ENCODE measurements at regions of chr16 and their contacts with region 1.

Region 1: GRCh38 chr16:89700100-89700648 is 1.3 kb downstream of the SPATA2L start:
- DNase-seq: peak; percentile 92 to 97 (median 93)
- H3K4me3 ChIP-seq: peak overlapping the region; percentile 34 to 64
- H3K4me3 Mint-ChIP-seq: peak overlapping the region; percentile 51 to 87 (median 70)
- H3K27ac ChIP-seq: peak overlapping the region; percentile 80
- H3K27ac Mint-ChIP-seq: peak overlapping the region; percentile 83 to 94 (median 92)
- H3K4me1 ChIP-seq: peaks cover 34% of the 10 kb centered on the region
- H3K4me1 Mint-ChIP-seq: peaks cover 8 to 42% (median 16%) of the 10 kb centered on the region in 4 donors
- H3K27me3 ChIP-seq: no peaks in the 10 kb centered on the region
- H3K27me3 Mint-ChIP-seq: no peaks in the 10 kb centered on the region

Region 2: GRCh38 chr16:89300311-89300975 is 399.7 kb before region 1 on chr16:
- CTCF ChIA-PET with region 1: no interaction called
- POLR2A ChIA-PET with region 1: no interaction called
- intact Hi-C with region 1: no loop called
- DNase-seq: no peak
- H3K4me3 ChIP-seq: no peak overlapping the region
- H3K4me3 Mint-ChIP-seq: no peak overlapping the region
- H3K27ac ChIP-seq: no peak overlapping the region
- H3K27ac Mint-ChIP-seq: peak overlapping the region in 3 of 7 donors; percentile 32 to 75 (median 37)
- H3K4me1 ChIP-seq: peaks cover 33% of the 10 kb centered on the region
- H3K4me1 Mint-ChIP-seq: peaks cover 38 to 69% (median 45%) of the 10 kb centered on the region in 4 donors
- H3K27me3 ChIP-seq: no peaks in the 10 kb centered on the region
- H3K27me3 Mint-ChIP-seq: no peaks in the 10 kb centered on the region

Region 3: DNA sequence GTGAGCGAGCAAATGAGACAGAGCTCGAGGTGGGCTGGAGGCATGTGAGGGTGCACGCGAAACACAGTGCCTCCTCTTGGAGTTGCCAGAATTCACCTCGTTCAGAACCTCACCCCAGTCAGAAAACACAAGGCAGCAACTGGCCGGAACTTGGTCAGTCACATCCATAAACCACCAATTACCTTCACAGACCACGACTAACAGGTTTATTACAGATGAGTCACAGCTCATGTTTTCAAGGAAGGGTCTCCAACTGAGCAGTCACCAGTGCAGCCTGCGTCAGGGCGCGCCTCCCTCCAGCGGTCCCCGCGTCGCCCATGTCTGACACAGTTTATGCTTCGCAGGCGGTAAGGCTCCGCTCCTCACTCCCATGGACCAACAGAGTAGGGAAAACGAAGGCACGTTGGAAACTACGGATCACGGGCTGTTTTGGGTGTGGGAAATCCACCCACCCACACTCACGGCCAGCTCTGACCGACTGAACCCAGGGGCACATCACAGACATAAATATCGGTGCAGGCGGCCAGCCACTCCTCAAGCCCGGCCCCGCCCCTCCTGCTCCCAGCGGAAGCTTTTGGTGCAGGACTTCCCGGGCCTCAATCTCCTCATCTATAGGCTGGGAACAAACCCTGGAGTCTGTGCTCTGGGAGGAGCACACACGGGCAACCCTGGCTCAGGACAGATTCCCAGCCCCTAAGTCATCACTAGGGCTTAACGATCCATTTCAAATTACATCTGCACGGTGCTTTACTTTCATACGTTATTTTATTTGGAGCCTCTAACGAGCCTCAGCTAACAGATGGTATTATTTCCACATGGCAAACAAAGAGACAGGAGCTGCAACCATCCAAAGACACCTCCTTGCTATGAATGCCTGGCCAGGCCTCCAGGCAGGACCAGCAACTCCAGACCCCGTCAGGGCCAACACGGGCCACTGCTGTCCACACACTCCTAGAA is 356.4 kb before region 1 on chr16:
- CTCF ChIA-PET with region 1: no interaction called
- POLR2A ChIA-PET with region 1: no interaction called
- intact Hi-C with region 1: no loop called
- DNase-seq: peak in 1 of 5 donors; percentile 18
- H3K4me3 ChIP-seq: no peak overlapping the region
- H3K4me3 Mint-ChIP-seq: peak overlapping the region in 1 of 8 donors; percentile 56
- H3K27ac ChIP-seq: no peak overlapping the region
- H3K27ac Mint-ChIP-seq: peak overlapping the region in 4 of 7 donors; percentile 7 to 63 (median 29)
- H3K4me1 ChIP-seq: peaks cover 90% of the 10 kb centered on the region
- H3K4me1 Mint-ChIP-seq: peaks cover 53 to 92% (median 73%) of the 10 kb centered on the region in 4 donors
- H3K27me3 ChIP-seq: no peaks in the 10 kb centered on the region
- H3K27me3 Mint-ChIP-seq: no peaks in the 10 kb centered on the region

Region 4: GRCh38 chr16:89686520-89687091 is 13.6 kb before region 1 on chr16 and contains the start of gene CDK10:
- CTCF ChIA-PET with region 1: interaction called, 33 read pairs
- POLR2A ChIA-PET with region 1: interaction called, 37 read pairs
- intact Hi-C with region 1: loop called (anchors 1 kb)
- DNase-seq: peak; percentile 78 to 95 (median 87)
- H3K4me3 ChIP-seq: peak within 1 kb of the TSS; percentile 57 to 84
- H3K4me3 Mint-ChIP-seq: peak within 1 kb of the TSS; percentile 84 to 96 (median 92)
- H3K27ac ChIP-seq: peak within 1 kb of the TSS; percentile 84
- H3K27ac Mint-ChIP-seq: peak within 1 kb of the TSS; percentile 78 to 98 (median 94)
- H3K4me1 ChIP-seq: peaks cover 14% of the 10 kb centered on the region
- H3K4me1 Mint-ChIP-seq: peaks cover 9 to 25% (median 13%) of the 10 kb centered on the region in 4 donors
- H3K27me3 ChIP-seq: no peaks in the 10 kb centered on the region
- H3K27me3 Mint-ChIP-seq: no peaks in the 10 kb centered on the region
- total RNA-seq, gene CDK10: 134 to 140 TPM

Region 5: DNA sequence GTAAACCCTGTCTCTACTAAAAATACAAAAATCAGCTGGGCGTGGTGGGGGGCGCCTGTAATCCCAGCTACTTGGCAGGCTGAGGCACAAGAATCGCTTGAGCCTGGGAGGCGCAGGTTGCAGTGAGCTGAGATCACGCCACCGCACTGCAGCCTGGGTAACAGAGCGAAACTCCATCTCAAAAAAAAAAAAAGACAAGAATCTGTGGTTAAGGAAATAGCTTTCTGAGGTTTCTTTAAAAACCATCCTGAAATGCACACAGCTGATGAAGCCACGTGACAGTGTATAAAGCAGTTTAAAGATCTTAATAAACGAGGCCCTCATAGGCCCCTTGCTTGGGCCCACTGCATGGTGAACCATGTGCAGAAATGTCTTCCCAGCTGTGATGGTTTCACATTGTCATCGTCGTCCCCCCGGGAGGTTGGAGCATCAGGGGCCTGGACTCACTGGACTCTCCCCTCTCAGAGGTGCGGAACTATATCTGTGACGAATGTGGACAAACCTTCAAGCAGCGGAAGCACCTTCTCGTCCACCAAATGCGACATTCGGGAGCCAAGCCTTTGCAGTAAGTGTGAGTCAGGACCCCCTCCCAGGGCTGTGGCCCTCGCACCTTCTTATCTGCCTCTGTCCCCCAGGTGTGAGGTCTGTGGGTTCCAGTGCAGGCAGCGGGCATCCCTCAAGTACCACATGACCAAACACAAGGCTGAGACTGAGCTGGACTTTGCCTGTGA is 37.3 kb after region 1 on chr16:
- CTCF ChIA-PET with region 1: interaction called, 42 read pairs
- POLR2A ChIA-PET with region 1: interaction called, 6 read pairs
- intact Hi-C with region 1: no loop called
- DNase-seq: peak; percentile 76 to 82 (median 81)
- H3K4me3 ChIP-seq: no peak overlapping the region
- H3K4me3 Mint-ChIP-seq: peak overlapping the region; percentile 20 to 82 (median 56)
- H3K27ac ChIP-seq: peak overlapping the region; percentile 31
- H3K27ac Mint-ChIP-seq: peak overlapping the region; percentile 74 to 92 (median 87)
- H3K4me1 ChIP-seq: peaks cover 49% of the 10 kb centered on the region
- H3K4me1 Mint-ChIP-seq: peaks cover 23 to 69% (median 39%) of the 10 kb centered on the region in 4 donors
- H3K27me3 ChIP-seq: no peaks in the 10 kb centered on the region
- H3K27me3 Mint-ChIP-seq: no peaks in the 10 kb centered on the region

Region 6: DNA sequence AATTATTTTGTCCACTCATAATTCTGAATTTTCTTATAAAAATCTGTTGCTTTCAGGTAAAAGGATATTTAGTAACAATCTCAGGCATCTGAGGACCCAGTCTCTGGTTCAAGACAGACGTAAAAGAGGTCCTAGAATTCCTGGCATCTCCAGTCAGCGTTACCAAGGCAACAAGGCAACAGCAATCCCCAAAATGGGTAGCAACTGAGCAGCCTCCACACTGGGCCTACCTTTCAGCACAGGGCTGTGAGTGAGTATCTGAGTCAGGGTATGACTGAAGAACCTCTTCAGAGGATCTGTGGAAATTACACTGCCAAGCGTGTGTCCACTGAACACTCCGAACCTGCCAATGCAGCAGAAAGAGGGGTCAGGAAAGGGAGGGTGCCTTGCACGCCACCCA is 95.5 kb after region 1 on chr16:
- CTCF ChIA-PET with region 1: interaction called, 293 read pairs
- POLR2A ChIA-PET with region 1: interaction called, 3 read pairs
- intact Hi-C with region 1: loop called (anchors 1 kb)
- DNase-seq: no peak
- H3K4me3 ChIP-seq: no peak overlapping the region
- H3K4me3 Mint-ChIP-seq: no peak overlapping the region
- H3K27ac ChIP-seq: no peak overlapping the region
- H3K27ac Mint-ChIP-seq: no peak overlapping the region
- H3K4me1 ChIP-seq: no peaks in the 10 kb centered on the region
- H3K4me1 Mint-ChIP-seq: peaks cover 6 to 14% (median 8%) of the 10 kb centered on the region in 4 donors
- H3K27me3 ChIP-seq: no peaks in the 10 kb centered on the region
- H3K27me3 Mint-ChIP-seq: no peaks in the 10 kb centered on the region

Region 7: DNA sequence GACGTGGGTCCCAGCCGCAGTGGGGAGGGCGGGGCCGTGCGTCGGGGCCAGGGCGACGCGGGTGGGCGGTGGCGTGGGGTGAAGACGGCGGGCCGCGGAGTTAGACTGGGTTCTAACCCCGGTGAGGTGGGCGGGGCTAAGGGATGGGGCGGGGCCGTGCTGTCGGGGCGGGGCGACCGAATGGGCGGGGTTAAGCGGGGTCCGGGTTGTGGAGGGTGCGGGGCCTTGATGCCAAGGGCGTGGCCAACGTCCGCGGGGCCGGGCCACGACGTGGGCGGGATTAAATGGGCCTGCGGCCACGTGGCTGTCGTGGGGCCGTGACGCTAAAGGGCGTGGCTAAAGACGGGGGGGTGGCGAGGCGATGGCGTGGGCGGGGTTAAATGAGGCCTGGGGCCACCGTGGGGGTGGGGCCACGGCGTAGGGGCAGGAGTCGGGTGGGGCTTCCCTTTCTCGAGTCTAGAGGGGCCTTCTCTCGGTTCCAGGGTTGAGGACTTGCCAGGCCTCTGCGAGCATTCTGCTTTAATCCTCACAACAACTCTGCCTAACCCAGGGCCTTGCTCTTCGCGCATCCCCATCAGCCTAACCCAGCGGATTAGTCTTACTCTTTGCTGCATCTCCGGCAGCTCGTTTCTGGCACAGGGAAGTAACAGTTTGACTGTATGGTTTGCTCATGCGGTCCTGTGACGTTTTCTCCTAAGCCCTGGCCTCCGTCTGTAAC is 174.0 kb after region 1 on chr16:
- CTCF ChIA-PET with region 1: interaction called, 13 read pairs
- POLR2A ChIA-PET with region 1: interaction called, 39 read pairs
- intact Hi-C with region 1: no loop called
- DNase-seq: peak; percentile 93 to 97 (median 94)
- H3K4me3 ChIP-seq: peak overlapping the region in 1 of 2 donors; percentile 88
- H3K4me3 Mint-ChIP-seq: peak overlapping the region; percentile 77 to 97 (median 92)
- H3K27ac ChIP-seq: peak overlapping the region; percentile 98
- H3K27ac Mint-ChIP-seq: peak overlapping the region; percentile 96 to 99 (median 98)
- H3K4me1 ChIP-seq: peaks cover 27% of the 10 kb centered on the region
- H3K4me1 Mint-ChIP-seq: peaks cover 4 to 31% (median 17%) of the 10 kb centered on the region in 4 donors
- H3K27me3 ChIP-seq: no peaks in the 10 kb centered on the region
- H3K27me3 Mint-ChIP-seq: no peaks in the 10 kb centered on the region

Region 8: GRCh38 chr16:89945670-89946069 is 245.5 kb after region 1 on chr16:
- CTCF ChIA-PET with region 1: no interaction called
- POLR2A ChIA-PET with region 1: no interaction called
- intact Hi-C with region 1: loop called (anchors 1 kb)
- DNase-seq: no peak
- H3K4me3 ChIP-seq: no peak overlapping the region
- H3K4me3 Mint-ChIP-seq: peak overlapping the region in 1 of 8 donors; percentile 20
- H3K27ac ChIP-seq: no peak overlapping the region
- H3K27ac Mint-ChIP-seq: no peak overlapping the region
- H3K4me1 ChIP-seq: peaks cover 16% of the 10 kb centered on the region
- H3K4me1 Mint-ChIP-seq: peaks cover 8 to 19% (median 15%) of the 10 kb centered on the region in 4 donors
- H3K27me3 ChIP-seq: peaks cover 5% of the 10 kb centered on the region
- H3K27me3 Mint-ChIP-seq: peaks cover 8 to 15% of the 10 kb centered on the region in 2 donors